HepG2 (cell line): ENCODE measurements at regions of chr13 and their contacts with region 1.

Region 1: DNA sequence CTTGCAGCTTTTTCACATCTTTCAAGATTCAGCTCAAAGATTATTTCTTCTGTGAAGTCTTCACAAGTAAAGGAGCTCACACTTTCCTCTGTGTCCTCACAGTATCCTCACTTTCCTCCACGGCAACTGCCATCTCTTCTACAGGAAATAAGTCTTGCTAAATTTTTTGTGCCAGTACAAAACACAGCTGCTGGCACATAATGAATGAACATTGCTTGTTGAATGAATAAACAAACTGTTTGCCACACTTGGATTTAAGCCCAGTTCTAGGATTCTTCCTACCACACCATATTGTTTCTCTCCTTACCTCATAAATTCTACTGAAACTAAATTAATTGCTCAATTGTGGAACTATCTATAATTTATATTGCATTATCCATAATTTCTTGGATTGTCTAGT is 59.5 kb downstream of the RAP2A start:
- DNase-seq: no peak
- ATAC-seq: no peak
- H3K4me3 ChIP-seq: no peak overlapping the region
- H3K27ac ChIP-seq: no peak overlapping the region
- H3K4me1 ChIP-seq: peaks cover 58% of the 10 kb centered on the region
- H3K27me3 ChIP-seq: no peaks in the 10 kb centered on the region; a peak in 1 of 5 replicates
- CTCF ChIP-seq: no peak
- EP300 ChIP-seq: no peak
- POLR2A ChIP-seq: no peak
- RAD21 ChIP-seq: no peak

Region 2: GRCh38 chr13:97432917-97433726 is 60.3 kb before region 1 on chr13:
- CTCF ChIA-PET with region 1: no interaction called
- POLR2A ChIA-PET with region 1: no interaction called
- in situ Hi-C with region 1: no loop called
- intact Hi-C with region 1: no loop called
- DNase-seq: peak; percentile 99
- ATAC-seq: peak; percentile 93
- H3K4me3 ChIP-seq: peak overlapping the region; percentile 77 to 86 (median 81)
- H3K27ac ChIP-seq: peak overlapping the region; percentile 96
- H3K4me1 ChIP-seq: peaks cover 50% of the 10 kb centered on the region
- H3K27me3 ChIP-seq: no peaks in the 10 kb centered on the region
- CTCF ChIP-seq: peak; percentile 26
- EP300 ChIP-seq: peak in 1 of 2 experiments; percentile 93; a peak in 2 of 4 replicates
- POLR2A ChIP-seq: peak; percentile 58 to 65
- RAD21 ChIP-seq: no peak

Region 3: DNA sequence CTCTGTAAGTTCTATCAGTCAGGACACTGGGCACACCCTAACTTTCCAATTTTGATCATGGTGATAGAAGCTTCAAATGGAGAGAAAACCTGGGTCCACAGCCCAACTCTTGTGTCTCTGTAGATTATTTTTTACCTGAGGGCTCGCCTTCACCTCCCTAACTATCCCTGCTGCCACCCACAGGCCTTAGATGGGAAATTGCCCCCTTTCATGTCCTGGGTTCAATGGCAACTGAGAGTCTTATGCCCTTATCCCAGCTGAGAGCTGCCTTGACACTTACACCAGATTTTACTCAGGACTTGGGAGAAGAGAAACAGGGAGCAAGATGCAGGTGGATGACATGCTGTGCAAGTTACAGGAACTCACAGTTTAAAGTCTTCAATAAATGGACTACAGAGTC is 22.2 kb after region 1 on chr13:
- CTCF ChIA-PET with region 1: no interaction called
- POLR2A ChIA-PET with region 1: no interaction called
- in situ Hi-C with region 1: no loop called
- intact Hi-C with region 1: loop called (anchors 1 kb)
- DNase-seq: no peak
- ATAC-seq: no peak; the same call in 2 of the 3 replicates
- H3K4me3 ChIP-seq: no peak overlapping the region
- H3K27ac ChIP-seq: no peak overlapping the region
- H3K4me1 ChIP-seq: no peaks in the 10 kb centered on the region
- H3K27me3 ChIP-seq: no peaks in the 10 kb centered on the region; a peak in 1 of 5 replicates
- CTCF ChIP-seq: no peak
- EP300 ChIP-seq: no peak
- POLR2A ChIP-seq: no peak
- RAD21 ChIP-seq: no peak

Region 4: DNA sequence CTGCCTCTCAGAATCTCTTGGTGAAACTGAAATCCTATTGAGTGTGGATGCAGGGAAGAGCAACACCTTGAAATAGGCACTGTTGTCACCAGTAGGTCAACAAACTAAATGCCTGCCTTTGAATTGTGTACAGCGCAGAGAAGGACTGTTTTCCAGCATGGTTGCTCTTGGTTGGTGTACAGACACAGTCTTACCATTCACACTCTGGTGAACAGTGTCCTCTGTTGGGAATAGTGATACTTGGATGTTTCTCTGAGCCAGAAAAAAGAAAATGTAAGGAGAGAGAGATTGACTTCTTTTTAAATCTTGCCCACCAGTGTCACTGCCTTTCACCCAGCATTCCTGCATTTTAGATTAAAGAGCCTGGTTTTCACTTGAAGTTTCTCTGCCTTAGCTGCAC is 903.8 kb after region 1 on chr13:
- CTCF ChIA-PET with region 1: no interaction called
- POLR2A ChIA-PET with region 1: no interaction called
- in situ Hi-C with region 1: no loop called
- intact Hi-C with region 1: no loop called
- DNase-seq: no peak
- ATAC-seq: 0 out of 3 replicates have a peak, but pooled peaks have one; percentile 9
- H3K4me3 ChIP-seq: no peak overlapping the region
- H3K27ac ChIP-seq: no peak overlapping the region
- H3K4me1 ChIP-seq: no peaks in the 10 kb centered on the region
- H3K27me3 ChIP-seq: no peaks in the 10 kb centered on the region
- CTCF ChIP-seq: peak; percentile 21; the same call in 1 of the 2 replicates
- EP300 ChIP-seq: no peak
- POLR2A ChIP-seq: no peak
- RAD21 ChIP-seq: no peak